ENCODE measurements at regions of chr2 and their contacts with region 1.

Region 1: DNA sequence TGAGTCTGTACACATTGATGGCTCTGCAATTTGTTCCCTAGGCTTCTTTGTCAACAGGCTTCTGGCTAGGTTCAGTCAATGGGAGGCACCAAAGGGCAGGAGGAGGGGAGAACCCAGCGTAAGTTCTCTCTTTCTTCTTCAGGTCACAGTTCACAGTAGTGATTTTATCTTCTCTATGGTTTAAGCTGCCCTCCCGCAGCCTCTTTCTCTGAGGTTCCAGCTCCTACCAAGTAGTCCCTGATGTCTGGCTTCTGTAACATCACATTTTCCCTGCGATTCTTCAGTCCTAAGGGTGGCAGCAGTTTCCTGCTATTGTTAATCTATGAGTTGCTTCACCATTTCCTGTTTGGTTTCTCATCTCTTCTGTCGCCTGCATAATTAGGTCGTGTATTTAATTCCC is 107.4 kb downstream of the CPO start:
- DNase-seq: no peak
- ATAC-seq: peak in 1 of 2 donors; percentile 41
- H3K4me3 ChIP-seq: no peak overlapping the region
- H3K27ac ChIP-seq: no peak overlapping the region
- H3K4me1 ChIP-seq: peaks cover 0 to 5% of the 10 kb centered on the region in 2 donors
- H3K27me3 ChIP-seq: no peaks in the 10 kb centered on the region
- CTCF ChIP-seq: no peak
- POLR2A ChIP-seq: no peak

Region 2: GRCh38 chr2:206635031-206635430 is 411.7 kb before region 1 on chr2:
- in situ Hi-C with region 1: no loop called
- intact Hi-C with region 1: no loop called
- DNase-seq: no peak
- ATAC-seq: no peak
- H3K4me3 ChIP-seq: no peak overlapping the region
- H3K27ac ChIP-seq: no peak overlapping the region
- H3K4me1 ChIP-seq: no peaks in the 10 kb centered on the region
- H3K27me3 ChIP-seq: no peaks in the 10 kb centered on the region
- CTCF ChIP-seq: no peak
- POLR2A ChIP-seq: no peak

Region 3: DNA sequence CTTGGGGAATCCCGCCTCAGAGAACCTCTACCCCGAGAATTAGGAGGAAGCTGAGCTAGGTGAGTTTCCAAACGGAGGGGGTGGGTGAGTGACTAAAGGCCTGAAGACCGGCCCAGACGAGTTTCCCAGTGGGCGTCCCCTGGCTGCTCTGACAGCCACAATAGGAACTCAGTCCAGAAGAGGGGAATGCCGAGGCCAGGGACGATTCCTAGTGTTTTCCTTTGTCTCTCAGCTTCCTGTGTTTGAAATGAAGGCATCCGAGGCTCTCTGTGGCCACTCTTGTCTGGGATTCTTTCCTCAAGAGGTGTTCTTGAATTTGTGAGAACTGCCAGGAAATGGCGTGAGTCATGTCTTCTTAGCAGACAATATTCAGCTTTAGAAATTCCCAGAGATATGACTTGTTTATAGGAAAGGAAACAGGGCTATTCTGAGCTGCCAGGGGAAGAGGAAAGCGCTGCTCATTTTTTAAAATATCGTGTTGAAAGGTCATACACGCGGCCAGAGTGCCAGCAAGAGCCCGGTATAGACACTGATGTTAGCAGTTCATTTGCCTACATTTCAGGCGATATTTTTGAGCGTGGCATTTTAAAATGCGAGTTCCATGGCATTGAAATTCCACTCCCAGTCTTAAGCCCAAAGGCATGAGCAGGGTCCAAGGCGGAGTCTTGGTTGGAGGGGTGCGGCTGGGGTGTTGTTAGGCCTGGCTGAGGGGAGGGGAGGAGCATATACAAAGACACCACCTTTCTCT is 288.1 kb after region 1 on chr2:
- in situ Hi-C with region 1: no loop called
- intact Hi-C with region 1: loop called (anchors 10 kb)
- DNase-seq: peak; percentile 17 to 34
- ATAC-seq: peak; percentile 76 to 83
- H3K4me3 ChIP-seq: peak overlapping the region; percentile 6 to 34 (median 32)
- H3K27ac ChIP-seq: peak overlapping the region; percentile 77 to 81 (median 80)
- H3K4me1 ChIP-seq: peaks cover 10 to 16% of the 10 kb centered on the region in 2 donors
- H3K27me3 ChIP-seq: no peaks in the 10 kb centered on the region
- CTCF ChIP-seq: no peak
- POLR2A ChIP-seq: no peak

Measured in gastrocnemius medialis (tissue), 4 donors.